ENCODE measurements at regions of chr17 and their contacts with region 1.

Region 1: GRCh38 chr17:49556223-49556971 is 19.3 kb upstream of the NXPH3 start:
- DNase-seq: no peak
- ATAC-seq: peak; percentile 99
- H3K4me3 ChIP-seq: no peak overlapping the region
- H3K27ac ChIP-seq: no peak overlapping the region
- H3K4me1 ChIP-seq: peaks cover 4% of the 10 kb centered on the region; the same call in 1 of the 2 replicates
- H3K27me3 ChIP-seq: no peaks in the 10 kb centered on the region
- CTCF ChIP-seq: peak; percentile 95 to 97 (median 96); a peak in 5 of 6 replicates
- EP300 ChIP-seq: no peak
- POLR2A ChIP-seq: no peak
- RAD21 ChIP-seq: peak; percentile 93

Region 2: GRCh38 chr17:49334744-49335512 is 221.5 kb before region 1 on chr17:
- CTCF ChIA-PET with region 1: no interaction called
- POLR2A ChIA-PET with region 1: no interaction called
- RAD21 ChIA-PET with region 1: no interaction called
- SMC1A ChIA-PET with region 1: no interaction called
- in situ Hi-C with region 1: no loop called
- intact Hi-C with region 1: no loop called
- DNase-seq: no peak
- ATAC-seq: no peak
- H3K4me3 ChIP-seq: no peak overlapping the region
- H3K27ac ChIP-seq: no peak overlapping the region
- H3K4me1 ChIP-seq: no peaks in the 10 kb centered on the region; the same call in 1 of the 2 replicates
- H3K27me3 ChIP-seq: no peaks in the 10 kb centered on the region
- CTCF ChIP-seq: no peak
- EP300 ChIP-seq: no peak
- POLR2A ChIP-seq: no peak
- RAD21 ChIP-seq: no peak

Region 3: DNA sequence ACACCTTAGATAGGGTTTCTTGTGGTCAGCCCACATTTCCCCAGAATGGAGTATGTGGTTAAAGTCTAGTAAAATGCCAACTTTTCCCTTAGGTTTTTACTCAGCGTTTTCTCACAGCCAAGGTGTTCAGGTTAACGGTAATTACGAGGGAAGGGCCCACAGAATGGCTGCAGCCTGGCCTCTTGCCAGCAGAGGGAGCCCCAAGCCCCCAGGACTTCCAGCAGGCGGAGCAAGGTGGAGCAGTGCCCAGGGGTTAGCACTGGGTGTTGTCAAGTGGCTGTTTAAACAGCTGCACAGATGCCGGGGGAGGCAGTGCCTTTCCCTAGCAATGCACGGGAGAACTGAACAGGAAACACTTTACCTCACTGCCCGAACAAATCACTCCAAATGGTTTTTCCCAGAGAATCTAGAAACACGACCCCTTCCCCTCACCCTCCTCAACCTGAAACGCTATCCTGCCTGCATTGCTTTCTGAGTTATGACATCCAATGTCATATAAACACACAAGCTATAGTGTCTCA is 148.4 kb before region 1 on chr17:
- CTCF ChIA-PET with region 1: interaction called, 119 read pairs
- POLR2A ChIA-PET with region 1: interaction called, 3 read pairs
- RAD21 ChIA-PET with region 1: interaction called, 27 read pairs
- SMC1A ChIA-PET with region 1: interaction called, 21 read pairs
- in situ Hi-C with region 1: loop called (anchors 10 kb)
- intact Hi-C with region 1: loop called (anchors 1 kb)
- DNase-seq: no peak
- ATAC-seq: peak; percentile 100
- H3K4me3 ChIP-seq: no peak overlapping the region
- H3K27ac ChIP-seq: no peak overlapping the region
- H3K4me1 ChIP-seq: peaks cover 10% of the 10 kb centered on the region
- H3K27me3 ChIP-seq: no peaks in the 10 kb centered on the region
- CTCF ChIP-seq: peak; percentile 96 to 99 (median 98)
- EP300 ChIP-seq: no peak
- POLR2A ChIP-seq: no peak
- RAD21 ChIP-seq: peak; percentile 80

Region 4: DNA sequence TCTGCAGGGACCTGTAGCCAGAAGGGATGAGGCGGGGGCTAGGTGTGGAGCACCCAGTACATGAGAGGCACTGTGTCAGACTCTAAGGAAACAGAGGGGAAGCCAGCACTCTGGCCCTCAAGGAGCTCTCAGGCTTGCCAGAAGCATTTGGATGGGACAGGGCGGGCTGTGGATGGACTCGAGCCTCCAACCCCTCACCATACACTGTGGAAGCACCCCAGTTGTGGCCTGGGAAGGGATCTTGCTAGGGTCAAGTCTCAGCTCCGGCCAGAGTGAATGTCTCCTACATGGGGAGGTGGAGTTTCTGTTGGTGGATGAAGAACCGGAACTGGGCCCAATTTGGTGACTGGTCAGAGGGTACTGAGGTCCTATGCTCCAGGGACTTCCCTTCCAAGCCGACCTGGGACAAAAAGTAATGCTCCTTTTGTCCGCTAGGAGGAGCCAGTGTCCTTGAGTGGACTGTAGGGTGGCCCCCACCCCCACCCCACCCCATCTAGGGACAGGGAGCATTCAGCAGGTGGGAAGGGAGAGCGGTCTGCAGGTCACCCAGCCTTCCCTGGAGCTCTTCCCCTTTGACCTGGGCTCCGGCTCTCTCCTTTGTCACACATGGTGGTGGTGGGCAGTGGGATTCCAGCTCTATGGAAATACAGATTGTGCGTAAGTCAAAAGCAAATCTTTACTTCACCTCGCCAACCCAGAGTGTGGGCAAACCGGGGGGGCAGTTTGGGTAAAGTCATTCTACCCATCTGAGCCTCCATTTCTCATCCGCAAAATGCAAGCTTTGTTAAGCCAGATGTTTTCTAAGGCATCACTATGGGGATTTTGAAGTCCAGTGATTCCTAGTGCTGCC is 121.4 kb before region 1 on chr17:
- CTCF ChIA-PET with region 1: interaction called, 125 read pairs
- POLR2A ChIA-PET with region 1: no interaction called
- RAD21 ChIA-PET with region 1: interaction called, 45 read pairs
- SMC1A ChIA-PET with region 1: interaction called, 13 read pairs
- in situ Hi-C with region 1: loop called (anchors 5 kb)
- intact Hi-C with region 1: loop called (anchors 1 kb)
- DNase-seq: no peak
- ATAC-seq: peak; percentile 90
- H3K4me3 ChIP-seq: no peak overlapping the region
- H3K27ac ChIP-seq: no peak overlapping the region
- H3K4me1 ChIP-seq: peaks cover 4% of the 10 kb centered on the region
- H3K27me3 ChIP-seq: no peaks in the 10 kb centered on the region; a peak in 1 of 4 replicates
- CTCF ChIP-seq: peak; percentile 66 to 80 (median 74)
- EP300 ChIP-seq: no peak
- POLR2A ChIP-seq: no peak
- RAD21 ChIP-seq: peak; percentile 77

Region 5: GRCh38 chr17:49515196-49515770 is 41.1 kb before region 1 on chr17:
- CTCF ChIA-PET with region 1: interaction called, 17 read pairs
- POLR2A ChIA-PET with region 1: no interaction called
- RAD21 ChIA-PET with region 1: interaction called, 6 read pairs
- SMC1A ChIA-PET with region 1: interaction called, 4 read pairs
- in situ Hi-C with region 1: no loop called
- intact Hi-C with region 1: no loop called
- DNase-seq: peak; percentile 55
- ATAC-seq: peak; percentile 98
- H3K4me3 ChIP-seq: no peak overlapping the region
- H3K27ac ChIP-seq: peak overlapping the region; percentile 49; the same call in 1 of the 2 replicates
- H3K4me1 ChIP-seq: peaks cover 24% of the 10 kb centered on the region
- H3K27me3 ChIP-seq: no peaks in the 10 kb centered on the region
- CTCF ChIP-seq: no peak
- EP300 ChIP-seq: peak in 1 of 2 experiments; percentile 27; a peak in 1 of 4 replicates
- POLR2A ChIP-seq: no peak
- RAD21 ChIP-seq: no peak

Region 6: DNA sequence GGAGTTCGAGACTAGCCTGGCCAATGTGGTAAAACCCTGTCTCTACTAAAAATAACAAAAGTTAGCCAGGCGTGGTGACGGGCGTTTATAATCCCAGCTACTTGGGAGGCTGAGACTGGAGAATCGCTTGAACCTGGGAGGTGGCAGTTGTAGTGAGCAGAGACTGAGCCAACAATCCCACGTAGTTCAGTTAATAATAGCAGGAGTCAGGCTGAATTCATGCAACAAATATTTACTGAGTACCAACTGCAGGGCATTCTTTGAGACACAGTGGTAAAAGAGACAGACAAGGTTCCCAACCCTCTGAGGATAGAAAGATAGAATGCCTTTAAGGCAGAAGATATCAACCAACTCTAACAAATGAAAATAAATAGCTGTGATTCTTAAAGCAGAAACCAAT is 82.4 kb after region 1 on chr17:
- CTCF ChIA-PET with region 1: no interaction called
- POLR2A ChIA-PET with region 1: no interaction called
- RAD21 ChIA-PET with region 1: no interaction called
- SMC1A ChIA-PET with region 1: no interaction called
- in situ Hi-C with region 1: no loop called
- intact Hi-C with region 1: no loop called
- DNase-seq: no peak
- ATAC-seq: no peak
- H3K4me3 ChIP-seq: no peak overlapping the region
- H3K27ac ChIP-seq: no peak overlapping the region
- H3K4me1 ChIP-seq: no peaks in the 10 kb centered on the region
- H3K27me3 ChIP-seq: no peaks in the 10 kb centered on the region
- CTCF ChIP-seq: no peak
- EP300 ChIP-seq: no peak
- POLR2A ChIP-seq: no peak
- RAD21 ChIP-seq: no peak

Region 7: GRCh38 chr17:49707608-49708514 is 151.5 kb after region 1 on chr17 and contains the start of gene SLC35B1:
- CTCF ChIA-PET with region 1: interaction called, 16 read pairs
- POLR2A ChIA-PET with region 1: no interaction called
- RAD21 ChIA-PET with region 1: interaction called, 6 read pairs
- SMC1A ChIA-PET with region 1: interaction called, 5 read pairs
- in situ Hi-C with region 1: no loop called
- intact Hi-C with region 1: no loop called
- DNase-seq: peak; percentile 97
- ATAC-seq: peak; percentile 98
- H3K4me3 ChIP-seq: peak within 1 kb of the TSS; percentile 91
- H3K27ac ChIP-seq: peak within 1 kb of the TSS; percentile 98
- H3K4me1 ChIP-seq: 0 out of 2 replicates have a peak, but pooled peaks cover 3% of the 10 kb centered on the region
- H3K27me3 ChIP-seq: no peaks in the 10 kb centered on the region
- CTCF ChIP-seq: peak; percentile 97 to 99 (median 98); a peak in 5 of 6 replicates
- EP300 ChIP-seq: 0 out of 4 replicates have a peak, but pooled peaks of 1 of the 2 experiments have one; percentile 10
- POLR2A ChIP-seq: peak; percentile 93
- RAD21 ChIP-seq: peak; percentile 70
- polyA plus RNA-seq, gene SLC35B1: 40.0 to 44.4 TPM

Measured in GM12878 (cell line).